A673 (cell line): ENCODE measurements at regions of chr9 and their contacts with region 1.

Region 1: DNA sequence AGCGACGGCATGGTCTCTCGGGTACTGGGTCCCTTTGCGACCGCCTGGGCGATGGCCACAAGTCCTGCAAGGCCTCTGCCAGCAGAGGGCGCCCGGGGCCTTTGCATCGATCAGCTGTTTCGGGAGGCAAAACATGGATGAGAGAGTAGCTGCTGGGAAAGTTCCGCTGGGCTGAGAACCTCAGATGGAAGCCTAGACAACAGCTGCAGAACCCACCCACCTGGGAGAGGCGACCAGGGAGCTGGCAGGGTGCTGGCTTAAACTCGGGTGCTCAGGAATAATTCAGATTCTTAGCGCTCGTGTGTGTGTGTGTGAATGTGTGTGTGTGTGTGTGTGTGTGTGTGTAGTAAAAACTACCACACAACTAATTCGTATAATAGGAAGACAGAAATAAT is 50.0 kb downstream of the TRIM32 start:
- DNase-seq: peak; percentile 92
- H3K4me3 ChIP-seq: no peak overlapping the region
- H3K27ac ChIP-seq: no peak overlapping the region
- H3K4me1 ChIP-seq: no peaks in the 10 kb centered on the region
- H3K27me3 ChIP-seq: no peaks in the 10 kb centered on the region
- CTCF ChIP-seq: peak; percentile 98

Region 2: GRCh38 chr9:114928136-114928535 is 1809.0 kb before region 1 on chr9:
- CTCF ChIA-PET with region 1: no interaction called
- POLR2A ChIA-PET with region 1: interaction called, 11 read pairs
- intact Hi-C with region 1: no loop called
- DNase-seq: no peak
- H3K4me3 ChIP-seq: no peak overlapping the region
- H3K27ac ChIP-seq: no peak overlapping the region
- H3K4me1 ChIP-seq: no peaks in the 10 kb centered on the region
- H3K27me3 ChIP-seq: no peaks in the 10 kb centered on the region
- CTCF ChIP-seq: no peak

Region 3: GRCh38 chr9:116671605-116672004 is 65.5 kb before region 1 on chr9:
- CTCF ChIA-PET with region 1: no interaction called
- POLR2A ChIA-PET with region 1: no interaction called
- intact Hi-C with region 1: no loop called
- DNase-seq: no peak
- H3K4me3 ChIP-seq: no peak overlapping the region
- H3K27ac ChIP-seq: no peak overlapping the region
- H3K4me1 ChIP-seq: no peaks in the 10 kb centered on the region
- H3K27me3 ChIP-seq: no peaks in the 10 kb centered on the region
- CTCF ChIP-seq: no peak

Region 4: GRCh38 chr9:116860509-116861120 is 123.5 kb after region 1 on chr9:
- CTCF ChIA-PET with region 1: interaction called, 72 read pairs
- POLR2A ChIA-PET with region 1: no interaction called
- intact Hi-C with region 1: loop called (anchors 1 kb)
- DNase-seq: peak; percentile 76
- H3K4me3 ChIP-seq: no peak overlapping the region
- H3K27ac ChIP-seq: no peak overlapping the region
- H3K4me1 ChIP-seq: no peaks in the 10 kb centered on the region
- H3K27me3 ChIP-seq: no peaks in the 10 kb centered on the region
- CTCF ChIP-seq: peak; percentile 83

Region 5: GRCh38 chr9:116883676-116884075 is 146.5 kb after region 1 on chr9:
- CTCF ChIA-PET with region 1: no interaction called
- POLR2A ChIA-PET with region 1: no interaction called
- intact Hi-C with region 1: no loop called
- DNase-seq: no peak
- H3K4me3 ChIP-seq: no peak overlapping the region
- H3K27ac ChIP-seq: no peak overlapping the region
- H3K4me1 ChIP-seq: no peaks in the 10 kb centered on the region
- H3K27me3 ChIP-seq: no peaks in the 10 kb centered on the region
- CTCF ChIP-seq: no peak